Lower leg skin (tissue), 4 donors: ENCODE measurements at regions of chrX and their contacts with region 1.

Region 1: GRCh38 chrX:41369152-41369551 is 35.2 kb downstream of the DDX3X start:
- DNase-seq: no peak
- H3K4me3 ChIP-seq: no peak overlapping the region
- CTCF ChIP-seq: no peak
- POLR2A ChIP-seq: no peak

Region 2: DNA sequence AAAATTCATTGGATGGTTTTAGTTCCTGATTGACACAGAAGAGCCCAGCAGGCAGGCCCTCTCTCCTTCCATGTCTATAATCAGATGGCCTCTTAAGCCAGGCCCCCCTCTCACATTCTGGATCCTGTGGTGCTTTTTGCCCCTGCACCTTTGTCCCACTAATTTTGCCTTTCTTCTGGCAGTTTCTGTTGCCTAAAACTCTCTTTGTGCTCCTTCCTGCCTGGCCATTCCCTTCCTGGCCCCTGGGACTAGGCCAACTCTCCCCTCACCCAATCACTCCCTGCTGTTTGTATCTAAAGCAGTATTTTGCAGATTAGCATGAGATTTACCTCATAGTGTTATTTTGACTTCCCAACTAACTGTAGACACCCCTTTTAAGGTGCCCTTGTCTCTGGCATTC is 77.8 kb before region 1 on chrX:
- intact Hi-C with region 1: loop called (anchors 2 kb)
- DNase-seq: no peak
- H3K4me3 ChIP-seq: no peak overlapping the region
- CTCF ChIP-seq: no peak
- POLR2A ChIP-seq: no peak

Region 3: DNA sequence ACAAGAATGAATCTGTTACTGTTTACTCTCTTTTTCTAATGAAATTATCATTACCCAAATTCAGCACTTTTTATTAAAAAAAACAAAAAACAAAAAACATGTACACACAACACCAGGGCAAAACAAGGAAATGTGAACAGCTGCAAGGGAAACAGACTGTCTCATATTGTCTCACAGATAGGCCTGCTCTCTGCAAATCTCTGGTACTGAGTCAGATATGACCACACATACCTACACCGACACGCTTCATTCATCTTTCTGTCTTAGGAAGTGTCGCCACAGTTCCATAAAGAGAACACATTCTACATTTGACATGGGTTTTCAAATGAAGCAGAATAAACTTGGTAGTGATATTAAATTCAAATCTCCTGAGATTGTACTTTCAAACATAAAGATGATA is 227.4 kb after region 1 on chrX:
- intact Hi-C with region 1: no loop called
- DNase-seq: no peak
- H3K4me3 ChIP-seq: no peak overlapping the region
- CTCF ChIP-seq: no peak
- POLR2A ChIP-seq: no peak